Activated CD8-positive, alpha-beta T cell treated with anti-CD3 and anti-CD28 coated beads for 36 hours (primary cell): ENCODE measurements at regions of chr6 and their contacts with region 1.

Region 1: DNA sequence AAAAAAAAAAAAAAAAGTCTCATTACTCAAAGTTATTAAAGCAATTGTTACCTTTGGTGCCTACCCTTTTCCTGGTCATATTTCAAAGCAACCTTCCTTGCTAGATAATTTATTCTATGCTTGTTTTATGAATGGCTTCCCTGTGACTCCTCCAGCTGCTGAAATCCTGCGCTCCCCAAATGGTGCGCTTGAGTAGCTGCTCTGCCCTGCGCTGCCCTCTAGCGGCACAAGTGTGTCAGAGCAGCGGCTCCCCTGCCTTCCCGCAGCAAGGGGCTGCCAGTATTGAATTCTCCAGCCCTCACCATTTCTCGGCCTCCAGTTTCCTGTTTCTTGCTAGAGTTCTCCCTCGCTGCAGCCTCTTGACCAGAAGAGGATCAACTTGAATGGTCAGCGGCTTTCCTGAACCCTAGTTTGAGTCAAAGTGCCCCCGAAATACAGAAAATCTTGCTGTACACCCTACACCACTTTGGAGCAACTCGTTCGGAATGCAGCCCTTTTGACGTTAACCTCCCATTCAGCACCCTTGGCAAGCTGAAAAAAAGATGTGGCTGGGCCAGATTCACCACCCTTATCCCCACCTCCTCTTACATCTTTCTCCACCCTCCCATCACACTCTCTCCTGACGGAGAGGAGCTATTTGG is 60.4 kb upstream of the KLHL31 start:
- DNase-seq: peak; percentile 82
- ATAC-seq: peak; percentile 92
- H3K4me3 Mint-ChIP-seq: no peak overlapping the region
- H3K27ac Mint-ChIP-seq: no peak overlapping the region
- H3K4me1 Mint-ChIP-seq: peaks cover 7% of the 10 kb centered on the region
- H3K27me3 Mint-ChIP-seq: peaks cover 11% of the 10 kb centered on the region
- CTCF ChIP-seq: peak; percentile 82

Region 2: DNA sequence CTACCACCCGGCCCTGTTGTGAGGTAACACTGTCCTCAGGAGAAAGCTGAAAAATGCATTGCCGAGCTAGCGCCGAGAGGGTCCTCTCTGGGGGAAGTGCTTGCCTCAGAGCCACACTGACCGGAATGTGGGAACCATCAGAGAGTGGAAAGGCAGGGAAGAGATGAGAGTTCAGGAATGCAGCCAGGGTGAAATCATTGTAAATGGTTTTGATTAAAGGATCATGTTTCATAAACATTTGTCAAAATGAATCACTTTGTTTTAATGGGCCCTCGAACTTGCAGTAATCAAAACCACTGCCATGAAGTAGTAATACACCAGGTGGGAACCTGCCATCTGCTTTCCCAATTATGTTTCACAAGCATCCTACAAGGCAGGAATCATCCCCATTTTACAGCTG is 1464.7 kb before region 1 on chr6:
- CTCF ChIA-PET with region 1: no interaction called
- POLR2A ChIA-PET with region 1: no interaction called
- intact Hi-C with region 1: no loop called
- DNase-seq: no peak
- ATAC-seq: no peak
- H3K4me3 Mint-ChIP-seq: no peak overlapping the region
- H3K27ac Mint-ChIP-seq: no peak overlapping the region
- H3K4me1 Mint-ChIP-seq: peaks cover 12% of the 10 kb centered on the region
- H3K27me3 Mint-ChIP-seq: no peaks in the 10 kb centered on the region
- CTCF ChIP-seq: no peak

Region 3: DNA sequence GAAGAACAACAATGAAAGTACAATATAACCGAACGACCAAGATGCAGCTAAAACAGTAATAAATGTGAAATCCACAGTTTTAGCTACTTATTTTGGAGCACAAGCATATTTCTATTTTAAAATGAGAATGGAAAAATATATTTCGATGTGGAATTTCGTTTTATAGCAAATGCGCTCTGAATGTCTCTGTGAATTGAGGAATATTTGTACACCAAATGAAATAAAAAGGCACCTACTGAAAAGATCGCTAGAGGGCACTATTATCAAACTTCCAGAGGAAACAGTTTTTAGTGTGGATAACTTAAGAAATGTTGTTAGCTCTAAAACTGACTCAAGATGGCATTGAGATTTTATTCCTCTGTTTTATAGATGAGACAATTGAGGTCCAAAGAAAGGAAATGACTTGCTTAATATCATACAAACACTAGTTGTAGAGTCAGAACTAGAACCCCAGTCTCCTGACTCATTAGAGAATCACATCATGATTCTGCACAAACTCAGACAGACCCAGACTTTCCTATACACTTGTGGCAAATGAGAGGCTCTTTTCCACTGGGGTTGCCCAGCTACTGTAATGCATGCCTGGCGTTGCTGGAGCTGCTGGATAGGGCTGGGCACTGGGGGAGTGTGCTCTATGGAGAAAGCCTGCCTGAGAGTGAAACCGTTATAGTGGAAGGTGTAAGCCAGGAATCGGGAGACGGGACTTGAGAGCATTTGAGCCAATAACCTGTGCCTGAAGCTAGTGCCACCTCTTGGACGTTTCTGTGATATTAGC is 232.9 kb before region 1 on chr6:
- CTCF ChIA-PET with region 1: interaction called, 224 read pairs
- POLR2A ChIA-PET with region 1: no interaction called
- intact Hi-C with region 1: loop called (anchors 2 kb)
- DNase-seq: peak; percentile 44
- ATAC-seq: peak; percentile 89
- H3K4me3 Mint-ChIP-seq: no peak overlapping the region
- H3K27ac Mint-ChIP-seq: peak overlapping the region; percentile 32
- H3K4me1 Mint-ChIP-seq: peaks cover 6% of the 10 kb centered on the region
- H3K27me3 Mint-ChIP-seq: peaks cover 13% of the 10 kb centered on the region
- CTCF ChIP-seq: peak; percentile 77

Region 4: GRCh38 chr6:53651764-53652401 is 74.0 kb before region 1 on chr6:
- CTCF ChIA-PET with region 1: interaction called, 23 read pairs
- POLR2A ChIA-PET with region 1: no interaction called
- intact Hi-C with region 1: loop called (anchors 5 kb)
- DNase-seq: peak; percentile 84
- ATAC-seq: peak; percentile 92
- H3K4me3 Mint-ChIP-seq: peak overlapping the region; percentile 83
- H3K27ac Mint-ChIP-seq: peak overlapping the region; percentile 88
- H3K4me1 Mint-ChIP-seq: peaks cover 31% of the 10 kb centered on the region
- H3K27me3 Mint-ChIP-seq: no peaks in the 10 kb centered on the region
- CTCF ChIP-seq: no peak

Region 5: GRCh38 chr6:53703047-53703446 is 22.9 kb before region 1 on chr6:
- CTCF ChIA-PET with region 1: interaction called, 26 read pairs
- POLR2A ChIA-PET with region 1: no interaction called
- intact Hi-C with region 1: no loop called
- DNase-seq: no peak
- ATAC-seq: no peak
- H3K4me3 Mint-ChIP-seq: no peak overlapping the region
- H3K27ac Mint-ChIP-seq: no peak overlapping the region
- H3K4me1 Mint-ChIP-seq: peaks cover 10% of the 10 kb centered on the region
- H3K27me3 Mint-ChIP-seq: no peaks in the 10 kb centered on the region
- CTCF ChIP-seq: no peak

Region 6: DNA sequence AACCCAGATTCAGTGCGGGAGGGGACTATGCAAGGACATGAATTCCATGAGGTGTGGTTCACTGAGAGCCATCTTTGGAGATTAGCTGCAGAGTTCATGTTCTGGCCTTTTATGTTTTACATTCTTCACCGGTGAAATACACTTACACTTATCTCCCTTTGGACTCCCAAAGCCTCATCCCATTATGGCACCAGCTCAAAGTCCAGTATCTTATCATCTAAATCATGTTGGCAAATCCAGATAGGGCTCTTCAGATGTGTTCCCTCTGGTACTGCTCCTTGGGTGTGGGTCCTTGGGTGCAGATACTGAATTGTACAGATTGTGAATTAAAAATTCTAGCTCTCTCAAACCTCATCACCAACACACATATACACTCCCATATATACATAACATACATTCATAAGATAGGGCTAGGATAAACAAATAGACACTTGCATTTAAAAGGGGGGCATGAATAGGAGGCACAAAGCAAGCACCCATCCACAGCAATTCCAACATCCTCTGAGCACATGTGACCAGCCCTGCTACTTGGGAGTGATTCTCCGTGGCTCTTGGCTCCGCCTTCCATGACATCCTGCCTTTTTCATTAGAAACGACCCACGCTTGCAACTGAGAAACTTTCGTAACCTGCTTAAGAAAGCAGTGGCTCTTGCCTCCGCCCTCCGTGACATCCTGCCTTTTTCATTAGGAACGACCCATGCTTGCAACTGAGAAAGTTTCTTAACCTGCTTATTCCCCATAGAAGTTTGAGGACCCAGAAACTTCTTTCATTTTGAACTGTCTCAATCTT is 15.3 kb after region 1 on chr6:
- CTCF ChIA-PET with region 1: interaction called, 84 read pairs
- POLR2A ChIA-PET with region 1: no interaction called
- intact Hi-C with region 1: no loop called
- DNase-seq: peak; percentile 70
- ATAC-seq: peak; percentile 97
- H3K4me3 Mint-ChIP-seq: peak overlapping the region; percentile 35
- H3K27ac Mint-ChIP-seq: peak overlapping the region; percentile 54
- H3K4me1 Mint-ChIP-seq: peaks cover 11% of the 10 kb centered on the region
- H3K27me3 Mint-ChIP-seq: peaks cover 1% of the 10 kb centered on the region
- CTCF ChIP-seq: no peak

Region 7: GRCh38 chr6:53926525-53926924 is 200.6 kb after region 1 on chr6:
- CTCF ChIA-PET with region 1: no interaction called
- POLR2A ChIA-PET with region 1: no interaction called
- intact Hi-C with region 1: no loop called
- DNase-seq: no peak
- ATAC-seq: no peak
- H3K4me3 Mint-ChIP-seq: no peak overlapping the region
- H3K27ac Mint-ChIP-seq: no peak overlapping the region
- H3K4me1 Mint-ChIP-seq: no peaks in the 10 kb centered on the region
- H3K27me3 Mint-ChIP-seq: no peaks in the 10 kb centered on the region
- CTCF ChIP-seq: no peak

Region 8: GRCh38 chr6:54100411-54101006 is 374.6 kb after region 1 on chr6:
- CTCF ChIA-PET with region 1: no interaction called
- POLR2A ChIA-PET with region 1: no interaction called
- intact Hi-C with region 1: no loop called
- DNase-seq: no peak
- ATAC-seq: no peak
- H3K4me3 Mint-ChIP-seq: no peak overlapping the region
- H3K27ac Mint-ChIP-seq: no peak overlapping the region
- H3K4me1 Mint-ChIP-seq: no peaks in the 10 kb centered on the region
- H3K27me3 Mint-ChIP-seq: no peaks in the 10 kb centered on the region
- CTCF ChIP-seq: no peak